HepG2 (cell line): ENCODE measurements at regions of chr4 and their contacts with region 1.

Region 1: GRCh38 chr4:83252782-83253405 is 31.7 kb downstream of the COQ2 start:
- DNase-seq: peak; percentile 55
- ATAC-seq: peak; percentile 88
- H3K4me3 ChIP-seq: no peak overlapping the region
- H3K27ac ChIP-seq: no peak overlapping the region
- H3K4me1 ChIP-seq: no peaks in the 10 kb centered on the region
- H3K27me3 ChIP-seq: no peaks in the 10 kb centered on the region
- CTCF ChIP-seq: peak; percentile 82
- EP300 ChIP-seq: no peak
- POLR2A ChIP-seq: no peak
- RAD21 ChIP-seq: peak; percentile 69; the same call in 1 of the 2 replicates

Region 2: DNA sequence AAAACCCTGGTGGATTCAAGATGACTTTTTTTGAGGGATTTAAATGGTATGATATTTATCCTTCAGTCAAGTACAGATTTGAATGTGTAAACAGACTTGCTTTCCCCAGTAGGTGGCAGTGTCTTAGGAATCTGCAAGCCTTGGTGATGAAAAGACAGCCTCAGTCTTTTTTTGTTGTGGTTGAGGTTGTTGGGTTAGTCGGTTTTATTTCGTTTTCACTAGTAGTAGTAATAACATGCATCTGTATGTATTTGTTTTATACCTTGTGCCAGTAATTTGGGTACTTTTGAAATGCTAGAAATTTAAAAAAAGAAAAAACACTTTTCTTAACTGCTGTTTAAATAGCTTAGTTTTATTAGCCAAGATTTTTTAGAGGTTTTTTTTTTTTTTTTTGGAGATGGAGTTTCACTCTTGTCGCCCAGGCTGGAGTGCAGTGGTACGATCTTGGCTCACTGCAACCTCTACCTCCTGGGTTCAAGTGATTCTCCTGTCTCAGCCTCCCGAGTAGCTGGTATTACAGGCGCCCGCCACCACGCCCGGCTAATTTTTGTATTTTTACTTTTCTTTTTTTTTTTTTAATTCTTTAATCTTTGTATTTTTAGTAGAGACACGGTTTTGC is 178.7 kb before region 1 on chr4:
- CTCF ChIA-PET with region 1: interaction called, 13 read pairs
- POLR2A ChIA-PET with region 1: no interaction called
- in situ Hi-C with region 1: loop called (anchors 10 kb)
- intact Hi-C with region 1: loop called (anchors 1 kb)
- DNase-seq: peak; percentile 75
- ATAC-seq: peak; percentile 78
- H3K4me3 ChIP-seq: no peak overlapping the region
- H3K27ac ChIP-seq: no peak overlapping the region
- H3K4me1 ChIP-seq: no peaks in the 10 kb centered on the region
- H3K27me3 ChIP-seq: no peaks in the 10 kb centered on the region
- CTCF ChIP-seq: peak; percentile 70
- EP300 ChIP-seq: no peak
- POLR2A ChIP-seq: no peak
- RAD21 ChIP-seq: peak; percentile 59; the same call in 1 of the 2 replicates

Region 3: GRCh38 chr4:83114576-83114975 is 138.3 kb before region 1 on chr4 and contains the start of gene PLAC8:
- CTCF ChIA-PET with region 1: no interaction called
- POLR2A ChIA-PET with region 1: no interaction called
- in situ Hi-C with region 1: no loop called
- intact Hi-C with region 1: loop called (anchors 2 kb)
- DNase-seq: peak; percentile 69
- ATAC-seq: peak; percentile 76
- H3K4me3 ChIP-seq: peak within 1 kb of the TSS; percentile 62 to 83 (median 72)
- H3K27ac ChIP-seq: peak within 1 kb of the TSS; percentile 78
- H3K4me1 ChIP-seq: peaks cover 61% of the 10 kb centered on the region
- H3K27me3 ChIP-seq: no peaks in the 10 kb centered on the region
- CTCF ChIP-seq: no peak
- EP300 ChIP-seq: no peak
- POLR2A ChIP-seq: peak; percentile 48 to 68
- RAD21 ChIP-seq: no peak
- total RNA-seq, gene PLAC8: 3.0 and 4.1 TPM in 2 replicates